Activated CD8-positive, alpha-beta T cell treated with anti-CD3 and anti-CD28 coated beads for 36 hours (primary cell): ENCODE measurements at regions of chr12 and their contacts with region 1.

Region 1: DNA sequence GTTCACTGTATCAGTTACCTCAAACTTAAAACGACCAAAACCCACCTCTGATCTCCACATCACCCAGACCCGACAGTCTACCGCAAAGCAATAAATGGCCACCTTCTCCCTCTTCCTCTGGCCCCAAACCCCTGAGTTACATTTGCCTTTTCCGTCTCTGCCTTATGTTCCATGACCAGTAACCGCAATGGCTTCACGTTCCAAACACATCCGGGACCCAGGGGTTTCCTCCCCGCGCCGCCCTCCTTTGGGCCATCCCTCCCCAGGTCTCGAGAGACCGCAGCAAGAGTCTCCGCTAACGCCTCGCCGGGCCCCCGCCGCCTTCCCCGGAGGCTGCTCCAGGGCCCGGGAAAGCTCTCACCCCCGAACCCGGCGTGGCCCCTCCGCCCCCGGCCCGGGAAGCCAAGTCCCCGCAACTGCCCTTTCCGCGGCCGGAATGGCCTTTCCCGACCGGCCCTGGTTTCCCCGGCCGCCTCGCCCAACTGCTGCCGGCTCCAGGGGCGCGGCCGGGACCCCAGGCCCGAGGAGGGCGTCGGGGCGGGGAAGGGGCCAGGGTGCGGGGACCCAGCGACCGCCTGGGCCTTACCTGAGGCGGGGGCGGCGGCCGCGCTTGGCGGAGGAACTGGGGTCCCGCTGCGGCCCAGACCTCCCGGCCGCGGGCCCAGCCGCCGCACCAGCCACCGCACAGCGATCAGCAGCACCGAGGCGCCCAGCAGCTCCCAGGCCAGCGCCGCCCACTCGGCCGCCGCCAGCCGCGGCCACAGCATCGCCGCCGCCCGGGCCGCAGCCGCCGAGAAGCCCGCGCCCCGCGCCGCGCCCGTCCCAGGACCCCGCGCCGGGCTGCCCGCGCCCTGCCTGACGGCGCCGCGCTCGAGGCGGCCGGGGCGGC is at the start of gene ANKLE2:
- DNase-seq: peak; percentile 86
- ATAC-seq: peak; percentile 49
- H3K4me3 Mint-ChIP-seq: peak within 1 kb of the TSS; percentile 90
- H3K27ac Mint-ChIP-seq: peak within 1 kb of the TSS; percentile 99
- H3K4me1 Mint-ChIP-seq: peaks cover 25% of the 10 kb centered on the region
- H3K27me3 Mint-ChIP-seq: no peaks in the 10 kb centered on the region
- CTCF ChIP-seq: no peak
- total RNA-seq, gene ANKLE2: 103 to 108 TPM

Region 2: DNA sequence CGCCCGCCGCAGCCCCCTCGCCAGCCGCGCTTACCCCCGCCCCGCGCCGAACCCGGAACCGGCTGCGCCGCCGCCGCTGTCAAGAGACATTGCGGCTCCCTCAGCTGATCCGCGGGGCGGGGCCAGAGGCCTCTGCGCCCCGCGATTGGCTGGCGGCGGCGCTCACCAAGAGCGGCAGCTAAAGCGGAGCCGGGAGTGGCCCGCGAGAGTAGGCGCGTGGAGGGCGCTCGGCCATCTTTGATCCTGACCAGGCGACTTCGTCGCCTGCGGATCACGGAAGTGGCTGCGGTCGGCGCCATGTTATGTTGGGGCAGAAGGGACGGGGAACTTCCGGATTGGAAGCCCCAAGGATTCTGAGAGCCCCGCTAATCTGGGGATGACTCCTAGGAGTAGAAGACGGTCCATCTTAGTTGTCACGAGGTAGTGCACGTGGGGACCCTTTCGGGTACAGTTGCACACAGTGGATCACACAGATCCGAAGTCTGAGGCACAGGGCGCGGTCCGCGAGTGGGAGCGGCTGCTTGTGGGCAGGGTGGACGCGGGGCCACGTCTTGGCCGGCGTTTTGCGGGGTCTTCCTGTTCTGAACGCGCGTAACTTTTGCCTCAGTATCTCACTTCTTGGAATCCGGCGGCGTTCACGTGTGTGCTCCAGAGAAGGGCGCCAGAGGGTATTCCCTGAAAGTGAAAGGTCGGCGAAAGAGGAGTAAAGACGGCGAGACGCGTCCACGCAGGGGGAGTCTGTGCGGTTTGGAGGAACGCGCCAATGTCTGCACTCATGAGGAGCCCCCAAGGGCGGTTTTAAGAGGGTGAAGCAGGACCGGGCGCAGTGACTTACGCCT is 126.5 kb after region 1 on chr12 and contains the start of gene CHFR:
- CTCF ChIA-PET with region 1: no interaction called
- POLR2A ChIA-PET with region 1: no interaction called
- intact Hi-C with region 1: loop called (anchors 10 kb)
- DNase-seq: peak; percentile 97
- ATAC-seq: peak; percentile 99
- H3K4me3 Mint-ChIP-seq: peak within 1 kb of the TSS; percentile 97
- H3K27ac Mint-ChIP-seq: peak within 1 kb of the TSS; percentile 100
- H3K4me1 Mint-ChIP-seq: peaks cover 24% of the 10 kb centered on the region
- H3K27me3 Mint-ChIP-seq: no peaks in the 10 kb centered on the region
- CTCF ChIP-seq: no peak
- total RNA-seq, gene CHFR: 40.5 to 51.2 TPM